Naive thymus-derived CD4-positive, alpha-beta T cell (primary cell): ENCODE measurements at regions of chr14 and their contacts with region 1.

Region 1: GRCh38 chr14:30496852-30497251 is 62.1 kb upstream of the G2E3 start:
- DNase-seq: no peak
- ATAC-seq: no peak
- H3K4me3 ChIP-seq: no peak overlapping the region
- H3K4me3 Mint-ChIP-seq: no peak overlapping the region
- H3K27ac ChIP-seq: no peak overlapping the region
- H3K27ac Mint-ChIP-seq: no peak overlapping the region
- H3K4me1 ChIP-seq: no peaks in the 10 kb centered on the region
- H3K4me1 Mint-ChIP-seq: no peaks in the 10 kb centered on the region
- H3K27me3 ChIP-seq: no peaks in the 10 kb centered on the region
- H3K27me3 Mint-ChIP-seq: peaks cover 0 to 12% (median 2%) of the 10 kb centered on the region in 5 donors

Region 2: GRCh38 chr14:30333934-30334333 is 162.9 kb before region 1 on chr14:
- CTCF ChIA-PET with region 1: no interaction called
- POLR2A ChIA-PET with region 1: no interaction called
- intact Hi-C with region 1: no loop called
- DNase-seq: no peak
- ATAC-seq: no peak
- H3K4me3 ChIP-seq: no peak overlapping the region
- H3K4me3 Mint-ChIP-seq: no peak overlapping the region
- H3K27ac ChIP-seq: no peak overlapping the region
- H3K27ac Mint-ChIP-seq: no peak overlapping the region
- H3K4me1 ChIP-seq: no peaks in the 10 kb centered on the region
- H3K4me1 Mint-ChIP-seq: peaks cover 0 to 2% (median 0%) of the 10 kb centered on the region in 7 donors
- H3K27me3 ChIP-seq: no peaks in the 10 kb centered on the region
- H3K27me3 Mint-ChIP-seq: peaks cover 0 to 16% (median 10%) of the 10 kb centered on the region in 5 donors

Region 3: GRCh38 chr14:30484976-30485375 is 11.9 kb before region 1 on chr14:
- CTCF ChIA-PET with region 1: no interaction called
- POLR2A ChIA-PET with region 1: interaction called, 3 read pairs
- intact Hi-C with region 1: loop called in 1 of 2 experiments (anchors 1 kb)
- DNase-seq: no peak
- ATAC-seq: no peak
- H3K4me3 ChIP-seq: no peak overlapping the region
- H3K4me3 Mint-ChIP-seq: no peak overlapping the region
- H3K27ac ChIP-seq: no peak overlapping the region
- H3K27ac Mint-ChIP-seq: no peak overlapping the region
- H3K4me1 ChIP-seq: no peaks in the 10 kb centered on the region
- H3K4me1 Mint-ChIP-seq: no peaks in the 10 kb centered on the region
- H3K27me3 ChIP-seq: no peaks in the 10 kb centered on the region
- H3K27me3 Mint-ChIP-seq: peaks cover 0 to 25% (median 15%) of the 10 kb centered on the region in 5 donors

Region 4: GRCh38 chr14:30525833-30526232 is 29.0 kb after region 1 on chr14:
- CTCF ChIA-PET with region 1: no interaction called
- POLR2A ChIA-PET with region 1: no interaction called
- intact Hi-C with region 1: no loop called
- DNase-seq: no peak
- ATAC-seq: no peak
- H3K4me3 ChIP-seq: no peak overlapping the region
- H3K4me3 Mint-ChIP-seq: no peak overlapping the region
- H3K27ac ChIP-seq: no peak overlapping the region
- H3K27ac Mint-ChIP-seq: no peak overlapping the region
- H3K4me1 ChIP-seq: peaks cover 4 to 7% of the 10 kb centered on the region in 2 donors
- H3K4me1 Mint-ChIP-seq: peaks cover 2 to 17% (median 11%) of the 10 kb centered on the region in 7 donors
- H3K27me3 ChIP-seq: no peaks in the 10 kb centered on the region
- H3K27me3 Mint-ChIP-seq: no peaks in the 10 kb centered on the region